ENCODE measurements at regions of chr5 and their contacts with region 1.

Region 1: GRCh38 chr5:164809831-164810230 is 1304.4 kb downstream of the MAT2B start:
- DNase-seq: no peak
- H3K4me3 ChIP-seq: no peak overlapping the region
- H3K27ac ChIP-seq: no peak overlapping the region
- H3K4me1 ChIP-seq: no peaks in the 10 kb centered on the region
- H3K27me3 ChIP-seq: no peaks in the 10 kb centered on the region
- CTCF ChIP-seq: no peak
- EP300 ChIP-seq: no peak
- POLR2A ChIP-seq: no peak

Region 2: GRCh38 chr5:166594597-166594996 is 1784.8 kb after region 1 on chr5:
- in situ Hi-C with region 1: no loop called
- intact Hi-C with region 1: loop called (anchors 5 kb)
- DNase-seq: no peak
- H3K4me3 ChIP-seq: no peak overlapping the region
- H3K27ac ChIP-seq: no peak overlapping the region
- H3K4me1 ChIP-seq: no peaks in the 10 kb centered on the region
- H3K27me3 ChIP-seq: no peaks in the 10 kb centered on the region
- CTCF ChIP-seq: no peak
- EP300 ChIP-seq: no peak
- POLR2A ChIP-seq: no peak